ENCODE measurements at regions of chr3 and their contacts with region 1.

Region 1: DNA sequence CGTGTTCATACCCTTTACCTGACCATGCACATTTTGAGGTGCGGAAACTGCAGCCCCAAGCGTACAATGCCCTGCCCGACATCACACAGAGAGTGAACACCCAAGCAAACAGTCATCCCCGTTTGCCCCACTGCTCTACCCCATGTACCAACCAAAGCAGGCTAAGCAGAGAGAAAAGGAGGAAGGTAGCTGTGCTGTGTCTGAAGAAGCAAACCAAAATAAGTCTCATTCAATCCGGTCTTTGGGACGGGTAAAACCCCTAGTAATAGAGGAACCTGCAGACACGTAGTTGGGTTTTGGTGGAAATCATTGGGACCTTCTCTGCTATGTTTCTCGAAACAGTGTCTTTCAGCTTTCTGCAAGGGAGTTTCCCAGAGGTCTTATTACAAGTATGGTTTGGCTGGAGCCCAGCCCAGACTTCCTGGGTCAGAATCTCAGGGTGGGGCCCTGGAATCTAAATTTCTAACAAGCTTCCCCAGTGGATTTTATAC is 164.6 kb upstream of the HES1 start:
- DNase-seq: peak; percentile 81
- ATAC-seq: peak; percentile 86
- H3K4me3 ChIP-seq: peak overlapping the region; percentile 66
- H3K27ac ChIP-seq: peak overlapping the region; percentile 91
- H3K4me1 ChIP-seq: peaks cover 35% of the 10 kb centered on the region
- H3K27me3 ChIP-seq: no peaks in the 10 kb centered on the region
- CTCF ChIP-seq: no peak

Region 2: DNA sequence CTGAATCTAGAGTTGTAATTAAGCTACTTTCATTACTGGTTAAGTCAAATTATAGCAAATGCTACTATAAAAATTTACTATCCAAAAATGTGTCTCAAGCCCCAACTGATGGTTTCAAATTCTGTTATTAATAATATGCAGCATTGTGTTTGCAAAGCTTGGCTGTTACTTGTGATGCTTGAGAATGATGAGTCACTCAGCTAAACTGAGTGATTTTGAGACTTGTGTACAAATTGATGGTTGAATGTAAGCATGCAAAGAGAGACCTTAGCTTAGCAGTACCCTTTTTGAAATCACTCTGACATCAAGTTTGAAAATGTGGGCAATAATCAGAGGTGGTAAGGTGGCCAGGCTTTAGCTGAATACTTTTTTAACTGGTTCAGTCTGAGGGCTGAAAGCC is 350.7 kb before region 1 on chr3:
- CTCF ChIA-PET with region 1: no interaction called
- POLR2A ChIA-PET with region 1: no interaction called
- intact Hi-C with region 1: no loop called
- DNase-seq: no peak
- ATAC-seq: peak; percentile 87
- H3K4me3 ChIP-seq: no peak overlapping the region
- H3K27ac ChIP-seq: no peak overlapping the region
- H3K4me1 ChIP-seq: no peaks in the 10 kb centered on the region
- H3K27me3 ChIP-seq: no peaks in the 10 kb centered on the region
- CTCF ChIP-seq: no peak

Region 3: DNA sequence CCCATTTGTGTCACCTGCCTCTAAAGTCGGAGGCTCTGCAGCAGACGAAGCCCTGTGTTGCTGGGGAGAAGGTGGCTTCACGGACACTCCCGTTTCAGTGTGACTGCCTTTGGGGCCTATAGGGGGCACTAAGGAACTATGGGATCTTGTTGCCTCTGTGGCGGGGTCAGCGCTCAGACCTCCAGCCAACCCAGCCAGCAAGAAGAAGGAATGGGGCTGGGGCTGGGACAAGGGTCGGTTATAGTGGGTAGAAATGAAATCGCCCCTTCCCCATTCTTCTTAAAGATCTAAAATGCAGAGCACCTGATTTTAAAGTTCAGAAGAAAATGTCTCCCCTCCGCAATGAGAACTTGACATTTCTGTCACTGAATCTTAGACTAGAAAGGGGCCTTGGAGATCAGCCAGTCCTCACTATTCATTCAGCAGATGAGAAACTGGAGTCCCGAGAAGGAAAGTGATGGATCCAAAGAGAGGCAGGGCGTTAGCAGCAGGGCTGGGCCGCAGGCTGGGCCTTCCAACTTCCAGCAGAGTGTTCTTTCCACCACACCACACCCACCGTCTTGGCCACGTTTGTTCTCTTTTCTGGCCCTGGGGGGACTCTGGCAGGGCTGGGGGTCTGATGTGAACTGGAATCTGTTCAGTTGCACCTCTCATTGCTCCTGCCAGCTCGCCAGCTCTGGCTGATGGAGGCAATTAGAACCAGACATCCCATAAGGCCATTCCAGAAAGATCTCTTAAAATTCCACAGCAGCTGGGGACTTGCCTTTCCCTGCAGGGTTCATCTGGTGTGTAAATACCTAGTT is 182.9 kb before region 1 on chr3:
- CTCF ChIA-PET with region 1: no interaction called
- POLR2A ChIA-PET with region 1: no interaction called
- intact Hi-C with region 1: loop called (anchors 2 kb)
- DNase-seq: peak; percentile 75
- ATAC-seq: peak; percentile 82
- H3K4me3 ChIP-seq: no peak overlapping the region
- H3K27ac ChIP-seq: no peak overlapping the region
- H3K4me1 ChIP-seq: peaks cover 28% of the 10 kb centered on the region
- H3K27me3 ChIP-seq: no peaks in the 10 kb centered on the region
- CTCF ChIP-seq: peak; percentile 90

Region 4: GRCh38 chr3:193946945-193947344 is 24.4 kb before region 1 on chr3:
- CTCF ChIA-PET with region 1: no interaction called
- POLR2A ChIA-PET with region 1: no interaction called
- intact Hi-C with region 1: loop called (anchors 1 kb)
- DNase-seq: peak; percentile 82
- ATAC-seq: peak; percentile 86
- H3K4me3 ChIP-seq: no peak overlapping the region
- H3K27ac ChIP-seq: peak overlapping the region; percentile 35
- H3K4me1 ChIP-seq: peaks cover 17% of the 10 kb centered on the region
- H3K27me3 ChIP-seq: no peaks in the 10 kb centered on the region
- CTCF ChIP-seq: no peak

Region 5: GRCh38 chr3:194070634-194071409 is 99.5 kb after region 1 on chr3:
- CTCF ChIA-PET with region 1: no interaction called
- POLR2A ChIA-PET with region 1: no interaction called
- intact Hi-C with region 1: loop called (anchors 2 kb)
- DNase-seq: peak; percentile 93
- ATAC-seq: peak; percentile 80
- H3K4me3 ChIP-seq: peak overlapping the region; percentile 60
- H3K27ac ChIP-seq: no peak overlapping the region
- H3K4me1 ChIP-seq: peaks cover 35% of the 10 kb centered on the region
- H3K27me3 ChIP-seq: no peaks in the 10 kb centered on the region
- CTCF ChIP-seq: no peak

Region 6: GRCh38 chr3:194323785-194324735 is 352.8 kb after region 1 on chr3:
- CTCF ChIA-PET with region 1: no interaction called
- POLR2A ChIA-PET with region 1: no interaction called
- intact Hi-C with region 1: loop called (anchors 5 kb)
- DNase-seq: peak; percentile 96
- ATAC-seq: peak; percentile 57
- H3K4me3 ChIP-seq: peak overlapping the region; percentile 57
- H3K27ac ChIP-seq: peak overlapping the region; percentile 100
- H3K4me1 ChIP-seq: peaks cover 44% of the 10 kb centered on the region
- H3K27me3 ChIP-seq: no peaks in the 10 kb centered on the region
- CTCF ChIP-seq: no peak